ENCODE measurements at regions of chr7 and their contacts with region 1.

Region 1: DNA sequence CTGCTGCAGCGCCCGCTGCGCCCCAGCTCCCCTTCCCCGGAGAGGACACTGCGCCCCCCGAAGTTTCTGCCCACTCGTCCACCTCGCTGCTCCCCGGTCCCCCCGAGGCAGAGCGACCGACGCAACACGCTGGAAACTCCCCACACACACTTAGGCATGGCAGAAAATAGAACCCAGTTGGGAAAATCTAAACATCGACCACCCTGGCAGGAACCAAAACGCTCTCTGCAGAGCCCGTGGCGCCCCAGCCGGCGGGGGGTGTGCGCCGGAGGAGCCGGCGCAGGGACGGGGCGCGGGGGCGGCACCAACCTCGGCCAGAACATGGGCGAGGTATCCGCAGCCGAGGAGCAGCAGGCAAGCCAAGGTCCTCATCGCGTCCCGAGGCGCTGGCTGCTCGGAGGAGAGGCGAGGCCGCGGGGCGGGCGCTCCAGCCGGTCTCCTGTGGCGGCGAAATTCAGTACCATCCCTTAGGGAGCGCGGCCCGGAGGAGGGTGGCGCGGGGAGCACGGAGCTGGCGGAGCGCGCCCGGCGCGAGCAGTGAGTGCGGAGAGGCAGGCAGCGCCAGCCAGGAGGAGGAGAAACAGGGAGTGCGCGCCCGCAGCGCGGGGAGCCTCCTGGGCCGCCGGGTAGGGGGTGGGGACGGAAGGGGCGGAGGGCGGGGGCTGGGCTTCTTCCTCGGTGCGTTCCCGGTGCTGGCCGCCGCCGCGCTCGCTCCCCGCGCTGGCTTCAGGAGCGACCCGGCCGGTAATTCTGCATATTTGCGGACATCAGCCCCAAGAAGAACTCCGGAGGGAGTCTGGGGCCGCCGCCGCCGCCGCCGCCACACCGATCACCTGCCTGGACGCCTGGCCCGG is 789 bp downstream of the PDGFA start:
- DNase-seq: peak; percentile 72
- H3K4me3 ChIP-seq: peak overlapping the region; percentile 79 to 85 (median 83)
- H3K27ac ChIP-seq: peak overlapping the region; percentile 13
- H3K4me1 ChIP-seq: peaks cover 30% of the 10 kb centered on the region
- H3K27me3 ChIP-seq: peaks cover 9 to 11% of the 10 kb centered on the region in 2 experiments
- CTCF ChIP-seq: no peak
- POLR2A ChIP-seq: peak; percentile 75

Region 2: GRCh38 chr7:332646-333392 is 186.0 kb before region 1 on chr7:
- CTCF ChIA-PET with region 1: interaction called, 34 read pairs
- POLR2A ChIA-PET with region 1: no interaction called
- dilution Hi-C with region 1: no loop called
- intact Hi-C with region 1: loop called (anchors 1 kb)
- DNase-seq: peak; percentile 56
- H3K4me3 ChIP-seq: peak overlapping the region in 2 of 3 experiments; percentile 6 to 26
- H3K27ac ChIP-seq: no peak overlapping the region
- H3K4me1 ChIP-seq: no peaks in the 10 kb centered on the region
- H3K27me3 ChIP-seq: peaks cover 0 to 2% of the 10 kb centered on the region in 2 experiments
- CTCF ChIP-seq: peak; percentile 84 to 97
- POLR2A ChIP-seq: no peak

Region 3: DNA sequence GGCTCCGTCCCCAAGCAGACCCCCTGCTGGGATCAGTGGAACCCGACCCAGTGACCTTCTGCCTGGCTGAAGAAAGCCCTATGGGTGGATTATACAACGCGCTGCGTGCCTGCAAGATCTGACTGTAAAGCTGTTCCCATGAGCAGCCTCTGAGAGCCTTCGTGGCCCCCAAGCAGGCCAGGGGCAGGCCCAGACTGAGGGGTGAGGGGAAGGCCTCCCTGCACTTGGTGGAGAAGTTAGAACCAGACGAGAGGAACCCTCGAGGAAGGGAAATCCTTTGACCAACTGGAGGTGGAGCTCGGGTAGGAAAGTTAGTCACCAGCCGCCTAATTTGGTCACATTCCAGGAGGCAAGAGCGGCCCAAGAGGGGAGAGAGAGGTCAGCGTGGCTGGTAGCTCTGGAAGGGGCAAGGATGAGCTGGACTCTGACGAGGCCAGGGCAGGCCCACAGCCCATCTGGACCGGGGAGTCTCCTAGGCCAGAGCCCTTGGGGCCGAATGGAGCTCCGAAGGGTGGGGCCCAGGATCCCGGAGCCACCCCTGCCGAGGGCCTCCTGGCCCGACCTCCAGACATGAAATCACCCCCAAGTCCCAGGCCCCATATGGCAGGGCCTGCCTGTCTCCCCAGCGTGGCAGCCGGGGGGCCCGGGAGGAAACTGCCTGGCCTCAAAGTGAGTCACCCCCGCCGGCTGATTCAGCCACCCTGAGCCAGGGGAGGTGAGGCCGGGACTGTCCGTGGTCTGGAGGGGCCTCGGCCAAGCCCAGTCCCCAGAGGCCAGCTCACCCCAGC is 24.1 kb after region 1 on chr7:
- CTCF ChIA-PET with region 1: interaction called, 12 read pairs
- POLR2A ChIA-PET with region 1: interaction called, 3 read pairs
- dilution Hi-C with region 1: no loop called
- intact Hi-C with region 1: loop called (anchors 1 kb)
- DNase-seq: peak; percentile 82
- H3K4me3 ChIP-seq: no peak overlapping the region
- H3K27ac ChIP-seq: peak overlapping the region; percentile 87
- H3K4me1 ChIP-seq: peaks cover 30% of the 10 kb centered on the region
- H3K27me3 ChIP-seq: no peaks in the 10 kb centered on the region
- CTCF ChIP-seq: no peak
- POLR2A ChIP-seq: no peak

Region 4: DNA sequence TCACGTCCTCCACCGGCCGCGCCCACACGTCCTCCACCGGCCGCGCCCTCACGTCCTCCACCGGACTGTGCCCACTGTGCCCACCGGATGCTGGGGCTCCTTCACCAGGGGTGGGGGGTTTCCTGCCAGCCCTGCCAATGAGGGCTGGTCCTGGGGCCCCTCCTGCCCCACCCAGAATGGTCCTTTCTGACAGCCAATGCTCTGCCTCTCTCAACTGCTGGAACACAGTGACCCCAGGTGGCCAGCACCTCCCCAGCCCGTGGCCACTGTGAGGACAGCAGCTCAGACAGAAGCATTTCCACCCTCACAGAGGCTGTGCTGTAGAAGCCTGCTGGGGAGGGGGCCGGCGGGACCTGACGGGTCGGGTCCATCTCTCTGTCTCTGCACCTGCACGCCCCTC is 117.5 kb after region 1 on chr7:
- CTCF ChIA-PET with region 1: interaction called, 8 read pairs
- POLR2A ChIA-PET with region 1: no interaction called
- dilution Hi-C with region 1: no loop called
- intact Hi-C with region 1: loop called (anchors 1 kb)
- DNase-seq: no peak
- H3K4me3 ChIP-seq: no peak overlapping the region
- H3K27ac ChIP-seq: no peak overlapping the region
- H3K4me1 ChIP-seq: no peaks in the 10 kb centered on the region
- H3K27me3 ChIP-seq: no peaks in the 10 kb centered on the region
- CTCF ChIP-seq: peak; percentile 47 to 51
- POLR2A ChIP-seq: no peak

Region 5: GRCh38 chr7:726084-726853 is 207.4 kb after region 1 on chr7 and contains the start of gene DNAAF5:
- CTCF ChIA-PET with region 1: interaction called, 4 read pairs
- POLR2A ChIA-PET with region 1: no interaction called
- dilution Hi-C with region 1: no loop called
- intact Hi-C with region 1: loop called (anchors 5 kb)
- DNase-seq: peak; percentile 79
- H3K4me3 ChIP-seq: peak within 1 kb of the TSS; percentile 38 to 57 (median 42)
- H3K27ac ChIP-seq: peak within 1 kb of the TSS; percentile 19
- H3K4me1 ChIP-seq: peaks cover 15% of the 10 kb centered on the region
- H3K27me3 ChIP-seq: no peaks in the 10 kb centered on the region
- CTCF ChIP-seq: no peak
- POLR2A ChIP-seq: peak; percentile 53
- total RNA-seq, gene DNAAF5: 45.4 and 49.3 TPM in 2 replicates

Region 6: DNA sequence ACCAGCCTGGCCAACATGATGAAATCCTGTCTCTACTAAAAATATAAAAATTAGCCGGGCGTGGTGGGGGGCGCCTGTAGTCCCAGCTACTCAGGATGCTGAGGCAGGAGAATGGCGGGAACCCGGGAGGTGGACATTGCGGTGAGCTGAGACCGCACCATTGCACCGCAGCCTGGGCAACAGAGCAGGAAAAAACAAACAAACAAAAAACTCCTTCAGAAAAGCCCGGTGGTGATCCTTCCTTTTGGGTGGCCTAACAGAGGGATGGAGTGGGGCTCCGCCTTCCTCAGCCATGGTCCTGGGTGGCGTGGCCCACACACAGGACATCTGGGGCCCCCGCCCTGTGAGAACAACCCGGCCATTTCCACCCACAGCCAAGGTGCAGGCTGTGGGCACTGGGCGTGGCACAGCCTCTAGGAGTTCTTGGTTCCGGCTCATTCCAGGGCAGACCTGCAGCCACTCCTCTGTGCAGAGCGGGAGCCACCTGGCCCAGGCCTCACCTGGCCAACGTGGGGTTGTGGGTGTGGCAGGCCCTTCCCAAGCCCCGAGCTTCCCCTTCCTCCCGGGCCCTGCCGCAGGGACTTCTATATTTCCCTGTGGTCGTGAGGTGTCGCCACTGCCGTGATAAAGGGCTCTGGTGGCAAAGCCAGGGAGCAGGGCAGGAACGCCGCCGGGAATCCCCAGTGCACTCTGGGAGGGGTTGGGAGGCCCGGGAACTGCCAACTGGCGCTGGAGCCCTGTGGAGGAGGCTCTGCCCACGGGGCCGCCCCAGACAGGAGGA is 395.1 kb after region 1 on chr7:
- CTCF ChIA-PET with region 1: no interaction called
- POLR2A ChIA-PET with region 1: no interaction called
- dilution Hi-C with region 1: no loop called
- intact Hi-C with region 1: no loop called
- DNase-seq: no peak
- H3K4me3 ChIP-seq: no peak overlapping the region
- H3K27ac ChIP-seq: no peak overlapping the region
- H3K4me1 ChIP-seq: no peaks in the 10 kb centered on the region
- H3K27me3 ChIP-seq: peaks cover 3 to 6% of the 10 kb centered on the region in 2 experiments
- CTCF ChIP-seq: no peak
- POLR2A ChIP-seq: no peak